ENCODE measurements at regions of chr1 and their contacts with region 1.

Region 1: GRCh38 chr1:94801919-94802546 is 18.1 kb upstream of the SLC44A3 start:
- DNase-seq: peak in 1 of 10 donors; percentile 53
- H3K4me3 ChIP-seq: peak overlapping the region in 51 of 59 donors; percentile 3 to 59 (median 35)
- H3K27ac ChIP-seq: peak overlapping the region; percentile 77 to 97 (median 92)
- H3K27me3 ChIP-seq: no peaks in the 10 kb centered on the region
- CTCF ChIP-seq: peak in 53 of 56 donors; percentile 8 to 74 (median 50)

Region 2: GRCh38 chr1:94045465-94046056 is 756.5 kb before region 1 on chr1:
- intact Hi-C with region 1: loop called in 1 of 2 experiments (anchors 10 kb)
- DNase-seq: peak; percentile 31 to 79 (median 58)
- H3K4me3 ChIP-seq: peak overlapping the region in 33 of 59 donors; percentile 6 to 54 (median 34)
- H3K27ac ChIP-seq: peak overlapping the region in 39 of 59 donors; percentile 13 to 87 (median 62)
- H3K27me3 ChIP-seq: no peaks in the 10 kb centered on the region
- CTCF ChIP-seq: peak; percentile 45 to 82 (median 71)

Region 3: GRCh38 chr1:94417978-94418663 is 383.9 kb before region 1 on chr1 and contains the start of gene ABCD3:
- intact Hi-C with region 1: loop called in 1 of 2 experiments (anchors 5 kb)
- DNase-seq: peak; percentile 90 to 95 (median 94)
- H3K4me3 ChIP-seq: peak within 1 kb of the TSS; percentile 76 to 99 (median 96)
- H3K27ac ChIP-seq: peak within 1 kb of the TSS; percentile 80 to 99 (median 97)
- H3K27me3 ChIP-seq: no peaks in the 10 kb centered on the region
- CTCF ChIP-seq: peak in 29 of 56 donors; percentile 5 to 62 (median 25)
- total RNA-seq, gene ABCD3: 29.3 to 56.2 (median 39.9) TPM

Region 4: GRCh38 chr1:94481473-94481933 is 320.5 kb before region 1 on chr1:
- intact Hi-C with region 1: loop called (anchors 2 to 10 kb)
- DNase-seq: peak in 7 of 10 donors; percentile 11 to 50 (median 45)
- H3K4me3 ChIP-seq: no peak overlapping the region
- H3K27ac ChIP-seq: peak overlapping the region in 9 of 59 donors; percentile 18 to 59 (median 43)
- H3K27me3 ChIP-seq: no peaks in the 10 kb centered on the region
- CTCF ChIP-seq: peak; percentile 42 to 90 (median 82)

Region 5: GRCh38 chr1:94522304-94522703 is 279.7 kb before region 1 on chr1:
- intact Hi-C with region 1: loop called (anchors 2 to 5 kb)
- DNase-seq: no peak
- H3K4me3 ChIP-seq: no peak overlapping the region
- H3K27ac ChIP-seq: no peak overlapping the region
- H3K27me3 ChIP-seq: no peaks in the 10 kb centered on the region
- CTCF ChIP-seq: peak in 52 of 56 donors; percentile 30 to 72 (median 52)

Region 6: DNA sequence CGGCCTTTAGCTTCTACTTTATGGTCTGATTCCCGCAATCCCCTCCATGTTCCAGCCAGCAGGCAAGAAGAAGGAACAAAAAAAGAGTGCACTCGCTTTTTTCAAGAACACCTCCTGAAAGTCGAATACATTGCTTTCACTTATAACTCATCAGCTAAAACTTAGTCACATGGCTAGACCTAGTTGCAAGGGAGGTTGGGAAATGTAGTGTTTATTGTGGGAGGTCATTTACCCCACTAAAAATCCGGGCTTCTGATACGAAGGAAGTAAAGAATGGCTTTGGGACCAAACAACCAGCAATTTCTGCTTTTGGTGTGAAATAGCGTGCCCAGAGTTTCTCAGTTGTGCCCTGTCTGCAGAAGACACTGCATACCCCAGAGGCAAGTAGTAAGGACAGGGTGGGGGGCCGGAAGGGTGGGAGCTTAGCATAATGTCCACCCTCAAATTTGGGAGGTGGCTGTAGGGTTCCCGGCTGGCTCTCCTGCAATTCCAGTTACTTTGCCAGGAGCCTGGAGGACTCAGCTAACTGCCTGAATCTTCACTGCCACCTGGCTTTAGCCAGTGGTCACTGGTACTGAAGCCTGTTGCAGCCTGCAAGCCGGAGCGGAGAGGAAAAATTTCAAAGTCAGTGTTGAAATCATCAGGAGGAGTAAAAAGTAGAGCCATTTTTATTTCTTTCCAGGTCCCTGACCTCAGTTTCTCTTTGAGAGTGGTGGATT is 202.8 kb before region 1 on chr1:
- intact Hi-C with region 1: loop called (anchors 5 kb)
- DNase-seq: peak in 1 of 10 donors; percentile 36
- H3K4me3 ChIP-seq: peak overlapping the region in 14 of 59 donors; percentile 1 to 30 (median 16)
- H3K27ac ChIP-seq: peak overlapping the region in 3 of 59 donors; percentile 34 to 48 (median 44)
- H3K27me3 ChIP-seq: peaks cover 0 to 5% (median 0%) of the 10 kb centered on the region in 45 donors
- CTCF ChIP-seq: peak in 54 of 56 donors; percentile 12 to 73 (median 52)

Region 7: GRCh38 chr1:94622757-94623156 is 179.3 kb before region 1 on chr1:
- intact Hi-C with region 1: no loop called
- DNase-seq: no peak
- H3K4me3 ChIP-seq: no peak overlapping the region
- H3K27ac ChIP-seq: no peak overlapping the region
- H3K27me3 ChIP-seq: peaks cover 0 to 3% (median 0%) of the 10 kb centered on the region in 45 donors
- CTCF ChIP-seq: no peak

Region 8: DNA sequence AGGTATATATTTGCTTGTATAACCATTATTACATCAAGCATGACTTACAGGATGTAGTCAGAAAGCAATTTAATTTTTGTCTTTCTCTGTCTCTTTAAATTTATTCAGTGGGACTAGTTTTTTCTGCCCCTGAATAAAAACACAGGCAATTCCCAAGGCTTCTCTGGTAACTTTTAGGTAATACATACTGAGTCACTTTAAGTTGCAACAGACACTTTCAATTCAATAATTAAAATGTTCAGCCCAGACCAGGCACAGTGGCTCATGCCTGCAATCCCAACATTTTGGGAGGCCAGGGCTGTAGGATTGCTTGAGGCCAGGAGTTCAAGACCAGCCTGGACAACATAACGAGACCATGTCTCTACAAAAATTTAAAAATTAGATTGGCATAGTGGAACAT is 30.4 kb after region 1 on chr1:
- intact Hi-C with region 1: no loop called
- DNase-seq: no peak
- H3K4me3 ChIP-seq: no peak overlapping the region
- H3K27ac ChIP-seq: no peak overlapping the region
- H3K27me3 ChIP-seq: no peaks in the 10 kb centered on the region
- CTCF ChIP-seq: no peak

Region 9: DNA sequence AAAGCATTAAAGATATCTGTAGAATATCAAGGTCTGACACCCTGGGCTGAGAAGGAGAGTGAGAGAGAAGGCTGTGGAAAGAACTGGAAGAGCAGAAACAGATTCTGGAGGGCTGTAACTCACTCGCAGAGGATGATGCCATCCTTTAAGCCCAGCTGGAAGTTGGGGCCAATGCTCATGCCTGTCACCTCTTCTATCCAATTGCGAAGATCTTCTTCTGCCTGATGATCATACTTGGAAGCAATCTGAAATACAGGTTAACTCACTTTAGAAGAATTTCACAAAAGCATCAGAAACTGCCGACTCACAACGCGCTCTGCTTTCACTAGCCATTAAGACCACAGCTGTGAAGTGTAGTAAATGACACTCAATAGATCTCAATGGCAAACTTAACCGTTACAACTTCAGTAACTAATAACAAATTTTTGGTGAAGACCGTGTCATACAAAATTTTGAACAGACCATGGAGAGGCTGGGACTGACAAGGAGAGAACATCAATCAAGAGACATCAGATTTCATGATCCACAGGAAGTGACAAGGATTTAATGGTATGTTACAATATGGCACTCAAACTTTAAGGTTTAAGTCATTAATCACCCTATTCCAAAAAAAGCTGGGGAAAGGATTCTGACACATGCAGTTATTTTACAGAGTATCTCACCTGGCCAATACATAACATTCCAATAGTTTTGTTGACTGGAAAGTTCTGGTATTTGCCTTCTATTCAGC is 101.4 kb after region 1 on chr1:
- intact Hi-C with region 1: no loop called
- DNase-seq: no peak
- H3K4me3 ChIP-seq: no peak overlapping the region
- H3K27ac ChIP-seq: peak overlapping the region in 17 of 59 donors; percentile 0 to 55 (median 18)
- H3K27me3 ChIP-seq: no peaks in the 10 kb centered on the region
- CTCF ChIP-seq: no peak

Region 10: GRCh38 chr1:95043141-95043980 is 241.3 kb after region 1 on chr1:
- intact Hi-C with region 1: loop called in 1 of 2 experiments (anchors 5 kb)
- DNase-seq: peak; percentile 75 to 93 (median 84)
- H3K4me3 ChIP-seq: peak overlapping the region in 15 of 59 donors; percentile 0 to 36 (median 18)
- H3K27ac ChIP-seq: peak overlapping the region in 47 of 59 donors; percentile 0 to 84 (median 53)
- H3K27me3 ChIP-seq: no peaks in the 10 kb centered on the region
- CTCF ChIP-seq: peak in 55 of 56 donors; percentile 97 to 100 (median 99)